ENCODE measurements at regions of chr13 and their contacts with region 1.

Region 1: GRCh38 chr13:40666045-40666904 is at the start of gene FOXO1:
- DNase-seq: peak; percentile 94 to 95
- ATAC-seq: peak; percentile 68 to 81 (median 78)
- H3K4me3 ChIP-seq: peak within 1 kb of the TSS; percentile 95
- H3K27ac ChIP-seq: peak within 1 kb of the TSS; percentile 99
- H3K4me1 ChIP-seq: peaks cover 31% of the 10 kb centered on the region
- H3K27me3 ChIP-seq: no peaks in the 10 kb centered on the region
- CTCF ChIP-seq: peak; percentile 4
- total RNA-seq, gene FOXO1: 54.3 to 160 (median 91.1) TPM

Region 2: GRCh38 chr13:40026174-40026585 is 640.1 kb before region 1 on chr13:
- intact Hi-C with region 1: no loop called
- DNase-seq: no peak
- ATAC-seq: no peak
- H3K4me3 ChIP-seq: no peak overlapping the region
- H3K27ac ChIP-seq: no peak overlapping the region
- H3K4me1 ChIP-seq: no peaks in the 10 kb centered on the region
- H3K27me3 ChIP-seq: peaks cover 0 to 3% (median 0%) of the 10 kb centered on the region in 3 donors
- CTCF ChIP-seq: no peak

Region 3: GRCh38 chr13:40190641-40191100 is 475.6 kb before region 1 on chr13:
- intact Hi-C with region 1: loop called in 1 of 2 experiments (anchors 5 kb)
- DNase-seq: peak in 1 of 2 donors; percentile 40
- ATAC-seq: peak; percentile 72 to 77 (median 73)
- H3K4me3 ChIP-seq: no peak overlapping the region
- H3K27ac ChIP-seq: peak overlapping the region; percentile 54
- H3K4me1 ChIP-seq: peaks cover 39% of the 10 kb centered on the region
- H3K27me3 ChIP-seq: no peaks in the 10 kb centered on the region
- CTCF ChIP-seq: no peak

Region 4: DNA sequence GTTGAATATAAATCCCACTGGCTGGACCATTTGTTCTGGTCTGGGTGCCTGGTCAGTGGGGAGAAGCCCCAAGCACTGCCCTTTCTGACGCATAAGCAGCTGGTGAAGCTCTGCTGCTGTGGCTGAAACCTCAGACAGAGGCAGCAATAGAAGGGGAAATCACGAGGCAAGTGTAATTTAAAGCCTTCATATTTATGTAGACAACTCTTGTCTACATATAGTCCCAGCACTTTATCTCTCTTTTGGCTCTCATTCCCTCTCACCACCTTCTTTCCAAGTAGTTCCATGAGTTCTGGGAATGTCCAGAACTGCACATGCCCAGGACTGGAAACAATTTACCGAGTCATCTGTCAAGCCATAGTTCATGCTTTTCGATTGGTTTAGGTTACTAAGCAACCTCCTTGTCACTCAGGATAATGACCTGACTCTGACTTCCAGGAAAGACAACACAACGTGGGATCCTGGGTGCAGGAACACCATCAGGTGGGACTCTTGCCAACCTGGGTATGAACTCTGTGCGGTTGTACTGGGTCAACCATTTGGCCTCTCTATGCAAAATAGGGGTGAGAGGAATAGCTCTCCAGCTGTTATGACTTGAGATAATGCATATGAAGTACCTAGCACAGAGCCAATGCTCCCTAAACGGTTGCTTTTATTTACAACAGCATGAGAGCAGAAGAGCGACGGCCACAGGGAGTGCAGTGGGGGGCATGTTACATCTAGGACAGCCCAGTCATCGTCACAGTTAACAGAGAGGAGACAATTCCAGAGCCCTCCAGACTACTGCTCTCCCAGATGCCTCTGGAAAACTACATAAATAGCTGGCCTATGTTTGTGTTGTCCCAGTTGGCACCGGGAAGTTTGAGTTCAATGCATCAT is 321.8 kb before region 1 on chr13:
- intact Hi-C with region 1: loop called (anchors 5 kb)
- DNase-seq: peak; percentile 50 to 86
- ATAC-seq: peak; percentile 82 to 86 (median 85)
- H3K4me3 ChIP-seq: no peak overlapping the region
- H3K27ac ChIP-seq: peak overlapping the region; percentile 81
- H3K4me1 ChIP-seq: peaks cover 44% of the 10 kb centered on the region
- H3K27me3 ChIP-seq: no peaks in the 10 kb centered on the region
- CTCF ChIP-seq: no peak

Region 5: GRCh38 chr13:40445557-40445990 is 220.7 kb before region 1 on chr13:
- intact Hi-C with region 1: loop called in 1 of 2 experiments (anchors 2 kb)
- DNase-seq: peak; percentile 72 to 90
- ATAC-seq: peak; percentile 77 to 91 (median 86)
- H3K4me3 ChIP-seq: no peak overlapping the region
- H3K27ac ChIP-seq: peak overlapping the region; percentile 66
- H3K4me1 ChIP-seq: peaks cover 24% of the 10 kb centered on the region
- H3K27me3 ChIP-seq: no peaks in the 10 kb centered on the region
- CTCF ChIP-seq: no peak

Region 6: GRCh38 chr13:40578055-40578454 is 88.2 kb before region 1 on chr13:
- intact Hi-C with region 1: no loop called
- DNase-seq: no peak
- ATAC-seq: peak; percentile 49 to 67 (median 56)
- H3K4me3 ChIP-seq: no peak overlapping the region
- H3K27ac ChIP-seq: no peak overlapping the region
- H3K4me1 ChIP-seq: peaks cover 80% of the 10 kb centered on the region
- H3K27me3 ChIP-seq: no peaks in the 10 kb centered on the region
- CTCF ChIP-seq: no peak

Region 7: DNA sequence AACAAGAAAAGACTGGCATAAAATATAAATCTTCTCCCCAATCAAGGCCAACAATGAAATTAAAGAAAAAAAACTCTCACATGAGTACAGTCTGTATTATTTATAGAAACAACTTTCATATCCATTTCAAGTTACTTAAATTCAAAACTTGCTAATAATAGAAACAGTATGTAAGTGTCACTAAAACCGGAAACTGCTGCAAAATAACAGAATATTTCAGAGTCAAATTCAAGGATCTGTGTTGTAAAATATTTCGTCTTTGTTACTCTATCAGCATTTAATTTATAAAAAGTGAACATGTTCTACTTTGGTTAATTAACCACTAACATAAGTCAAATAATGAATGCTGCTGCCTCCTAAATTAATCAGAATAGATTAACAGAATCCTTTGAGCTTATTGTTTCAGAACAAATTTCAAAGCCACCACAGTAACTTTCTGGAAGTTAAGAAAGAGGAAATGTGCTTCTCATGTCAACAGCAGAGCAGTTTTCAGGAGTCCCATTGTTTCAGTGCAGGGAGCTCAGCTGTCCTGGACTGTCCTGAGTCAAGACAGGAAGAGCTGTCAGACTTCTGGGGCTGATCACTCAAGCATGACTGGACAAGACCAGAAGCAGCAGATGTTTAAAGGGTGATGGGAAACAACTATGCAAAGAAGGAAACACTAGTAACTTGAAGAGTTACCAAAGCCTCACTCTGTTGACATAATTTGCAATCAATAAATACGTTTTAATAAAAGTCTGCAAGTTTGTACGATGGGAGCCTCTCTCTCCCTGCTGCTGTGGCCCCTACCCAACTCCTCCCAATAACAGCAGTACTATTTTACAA is 76.8 kb before region 1 on chr13:
- intact Hi-C with region 1: loop called in 1 of 2 experiments (anchors 2 kb)
- DNase-seq: peak; percentile 42 to 62
- ATAC-seq: peak; percentile 83 to 90 (median 86)
- H3K4me3 ChIP-seq: peak overlapping the region; percentile 40
- H3K27ac ChIP-seq: peak overlapping the region; percentile 90
- H3K4me1 ChIP-seq: peaks cover 89% of the 10 kb centered on the region
- H3K27me3 ChIP-seq: no peaks in the 10 kb centered on the region
- CTCF ChIP-seq: no peak

Region 8: DNA sequence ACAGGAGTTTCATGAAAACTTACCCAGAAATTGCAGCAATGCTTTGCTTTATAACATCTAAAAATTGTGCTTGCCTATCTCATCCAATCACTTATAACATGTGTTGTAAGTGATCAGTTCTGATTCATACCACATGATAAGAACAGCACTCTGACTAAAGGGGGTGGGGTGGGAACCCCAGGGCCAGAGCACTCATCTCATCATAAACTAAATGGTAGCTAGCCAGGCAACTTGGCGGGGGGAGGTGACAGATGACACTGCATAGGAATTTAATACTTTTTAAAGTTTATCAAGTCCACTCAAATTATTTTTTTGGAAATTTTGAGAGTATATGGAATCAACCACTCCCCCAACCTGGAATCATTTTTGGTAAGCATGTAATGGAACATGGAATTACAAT is 41.9 kb before region 1 on chr13:
- intact Hi-C with region 1: loop called (anchors 5 kb)
- DNase-seq: peak in 1 of 2 donors; percentile 37
- ATAC-seq: peak; percentile 45 to 63 (median 56)
- H3K4me3 ChIP-seq: no peak overlapping the region
- H3K27ac ChIP-seq: peak overlapping the region; percentile 43
- H3K4me1 ChIP-seq: peaks cover 93% of the 10 kb centered on the region
- H3K27me3 ChIP-seq: no peaks in the 10 kb centered on the region
- CTCF ChIP-seq: no peak

Region 9: DNA sequence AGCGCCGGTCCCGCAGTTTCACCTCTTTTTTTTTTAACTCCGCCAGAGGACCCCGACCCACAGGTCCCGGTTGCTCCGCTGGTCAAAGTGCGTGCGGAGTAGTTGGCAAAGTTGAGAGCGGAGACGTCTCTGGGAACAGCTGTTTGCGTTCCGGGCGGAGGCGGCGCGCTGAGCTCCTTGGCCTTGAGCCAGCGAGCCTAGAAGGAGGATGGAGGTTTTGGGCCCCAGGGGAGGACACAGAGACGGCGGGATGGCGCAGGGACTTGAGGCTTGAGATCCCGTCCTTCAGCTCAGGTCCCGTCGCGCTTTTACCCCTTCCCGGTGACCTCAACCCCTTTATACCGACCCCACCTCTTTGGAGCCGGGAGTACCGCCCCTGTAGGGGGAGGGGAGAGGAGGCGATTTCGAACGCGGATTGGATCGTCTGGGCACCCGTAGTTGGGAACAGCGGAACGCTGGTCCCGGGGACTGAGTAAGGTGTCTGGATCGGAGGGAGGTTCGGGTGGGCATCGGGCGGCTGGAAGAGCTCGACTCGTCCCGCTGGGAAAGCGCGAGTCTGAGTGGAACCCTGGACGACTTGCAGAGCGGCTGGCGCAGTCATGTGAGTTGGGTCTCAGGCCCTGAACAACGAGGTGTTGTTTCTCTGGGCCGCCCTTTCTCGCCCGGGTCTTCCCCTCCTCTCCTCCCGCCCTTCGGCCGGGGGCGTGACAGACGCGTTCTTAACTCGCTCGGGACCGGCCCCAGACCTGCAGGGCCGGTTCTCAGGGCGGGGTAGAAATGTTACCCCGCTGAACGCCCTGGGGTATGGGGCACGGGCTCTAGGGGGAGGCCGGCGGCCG is 395.0 kb after region 1 on chr13 and contains the start of gene WBP4:
- intact Hi-C with region 1: no loop called
- DNase-seq: peak; percentile 95 to 97
- ATAC-seq: peak; percentile 81 to 85 (median 84)
- H3K4me3 ChIP-seq: peak within 1 kb of the TSS; percentile 88
- H3K27ac ChIP-seq: peak within 1 kb of the TSS; percentile 98
- H3K4me1 ChIP-seq: peaks cover 64% of the 10 kb centered on the region
- H3K27me3 ChIP-seq: no peaks in the 10 kb centered on the region
- CTCF ChIP-seq: no peak
- total RNA-seq, gene WBP4: 18.8 to 24.9 (median 21.6) TPM